ENCODE measurements at regions of chr15 and their contacts with region 1.

Region 1: GRCh38 chr15:40440743-40441564 is at the start of gene BAHD1:
- DNase-seq: peak; percentile 95 to 99
- H3K4me3 ChIP-seq: peak within 1 kb of the TSS; percentile 88 to 99
- H3K27ac ChIP-seq: peak within 1 kb of the TSS; percentile 74 to 81
- H3K4me1 ChIP-seq: peaks cover 0 to 69% (median 44%) of the 10 kb centered on the region in 4 donors
- H3K27me3 ChIP-seq: peaks cover 0 to 39% of the 10 kb centered on the region in 2 donors
- CTCF ChIP-seq: peak in 1 of 2 experiments; percentile 17

Region 2: GRCh38 chr15:40506964-40507571 is 66.1 kb after region 1 on chr15:
- intact Hi-C with region 1: loop called (anchors 10 kb)
- DNase-seq: peak; percentile 63 to 79
- H3K4me3 ChIP-seq: peak overlapping the region; percentile 22 to 46
- H3K27ac ChIP-seq: no peak overlapping the region
- H3K4me1 ChIP-seq: peaks cover 0 to 24% (median 13%) of the 10 kb centered on the region in 4 donors
- H3K27me3 ChIP-seq: peaks cover 0 to 5% of the 10 kb centered on the region in 2 donors
- CTCF ChIP-seq: peak; percentile 47 to 58

Region 3: GRCh38 chr15:40564591-40565332 is 123.8 kb after region 1 on chr15 and contains the start of gene CCDC32:
- intact Hi-C with region 1: loop called (anchors 10 kb)
- DNase-seq: peak; percentile 99
- H3K4me3 ChIP-seq: peak within 1 kb of the TSS; percentile 77 to 89
- H3K27ac ChIP-seq: peak within 1 kb of the TSS; percentile 93 to 97
- H3K4me1 ChIP-seq: peaks cover 0 to 25% (median 10%) of the 10 kb centered on the region in 4 donors
- H3K27me3 ChIP-seq: no peaks in the 10 kb centered on the region
- CTCF ChIP-seq: no peak

Measured in tibial artery (tissue), 4 donors.